IMR-90 (cell line): ENCODE measurements at regions of chr4 and their contacts with region 1.

Region 1: DNA sequence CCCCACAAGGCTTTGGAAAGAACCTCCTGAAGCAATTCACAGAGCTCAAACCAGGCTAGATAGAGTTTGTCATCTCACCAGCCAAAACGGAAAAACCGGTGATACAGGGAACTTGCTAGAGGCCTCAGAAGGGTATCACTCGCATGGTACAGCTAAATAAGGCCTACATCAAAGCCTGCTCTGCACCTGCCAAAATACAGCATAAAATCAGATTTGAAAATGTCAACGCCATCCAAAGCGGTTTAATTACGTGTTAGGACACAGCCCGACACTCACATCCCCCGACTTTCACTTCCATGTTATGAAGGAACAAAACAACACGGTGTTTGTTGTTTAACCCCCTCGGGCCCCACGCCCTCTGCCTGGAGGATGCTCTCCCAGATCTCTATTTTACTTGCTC is 65.0 kb downstream of the MAPK10 start:
- DNase-seq: no peak
- ATAC-seq: no peak
- H3K4me3 ChIP-seq: no peak overlapping the region
- H3K27ac ChIP-seq: no peak overlapping the region
- H3K4me1 ChIP-seq: no peaks in the 10 kb centered on the region
- H3K27me3 ChIP-seq: no peaks in the 10 kb centered on the region
- CTCF ChIP-seq: no peak
- POLR2A ChIP-seq: no peak
- RAD21 ChIP-seq: no peak

Region 2: GRCh38 chr4:86855573-86855992 is 560.7 kb after region 1 on chr4:
- CTCF ChIA-PET with region 1: no interaction called
- POLR2A ChIA-PET with region 1: no interaction called
- dilution Hi-C with region 1: no loop called
- in situ Hi-C with region 1: no loop called
- intact Hi-C with region 1: loop called (anchors 5 kb)
- DNase-seq: peak; percentile 81
- ATAC-seq: peak; percentile 79
- H3K4me3 ChIP-seq: no peak overlapping the region
- H3K27ac ChIP-seq: no peak overlapping the region
- H3K4me1 ChIP-seq: peaks cover 5% of the 10 kb centered on the region
- H3K27me3 ChIP-seq: no peaks in the 10 kb centered on the region
- CTCF ChIP-seq: no peak
- POLR2A ChIP-seq: no peak
- RAD21 ChIP-seq: no peak